Naive thymus-derived CD4-positive, alpha-beta T cell (primary cell): ENCODE measurements at regions of chr19 and their contacts with region 1.

Region 1: DNA sequence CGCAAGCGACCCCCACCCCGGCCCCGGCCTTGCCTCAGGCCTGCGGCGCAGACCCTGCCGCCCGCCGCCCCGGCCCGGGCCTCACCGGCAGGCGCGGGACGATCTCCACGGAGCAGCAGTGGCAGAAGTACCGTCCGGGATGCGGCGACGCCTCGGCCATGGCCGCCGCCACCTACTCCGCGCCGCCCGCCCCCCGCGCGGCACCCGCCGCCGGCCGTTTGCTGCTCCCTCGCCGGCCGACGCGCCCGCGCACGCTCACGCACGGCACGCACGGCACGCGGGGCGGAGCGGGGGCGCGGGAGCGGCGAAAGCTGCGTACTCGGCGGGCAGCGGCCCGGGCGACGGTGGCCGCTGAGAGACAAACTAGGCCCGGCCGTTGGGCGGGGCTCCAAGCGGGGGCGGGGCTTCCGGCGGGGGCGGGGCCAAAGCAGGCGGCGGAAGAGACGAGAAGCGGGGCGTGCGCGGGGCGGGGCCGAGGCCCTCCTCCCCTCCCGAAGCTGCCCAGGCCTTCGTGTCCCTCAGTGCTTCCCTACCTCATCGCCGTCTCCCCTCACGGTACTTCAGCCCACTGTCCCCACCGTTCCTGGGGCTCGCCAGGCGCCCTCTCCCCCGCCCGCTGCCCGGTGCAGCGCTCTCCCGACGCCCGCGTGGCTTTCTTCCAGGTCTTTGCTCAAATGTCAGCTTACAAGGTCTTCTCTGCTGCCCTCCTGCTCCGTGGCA is at the start of gene RNF126:
- DNase-seq: peak; percentile 83 to 92 (median 88)
- ATAC-seq: peak; percentile 78
- H3K4me3 ChIP-seq: peak within 1 kb of the TSS; percentile 92
- H3K4me3 Mint-ChIP-seq: peak within 1 kb of the TSS; percentile 95 to 99 (median 98)
- H3K27ac ChIP-seq: peak within 1 kb of the TSS; percentile 96
- H3K27ac Mint-ChIP-seq: peak within 1 kb of the TSS; percentile 93 to 98 (median 97)
- H3K4me1 ChIP-seq: peaks cover 27 to 30% of the 10 kb centered on the region in 2 donors
- H3K4me1 Mint-ChIP-seq: peaks cover 20 to 40% (median 32%) of the 10 kb centered on the region in 7 donors
- H3K27me3 ChIP-seq: no peaks in the 10 kb centered on the region
- H3K27me3 Mint-ChIP-seq: peaks cover 0 to 2% (median 0%) of the 10 kb centered on the region in 5 donors
- total RNA-seq, gene RNF126: 75.1 to 110 (median 101) TPM

Region 2: GRCh38 chr19:531009-531752 is 131.9 kb before region 1 on chr19:
- CTCF ChIA-PET with region 1: no interaction called
- POLR2A ChIA-PET with region 1: interaction called, 3 read pairs
- intact Hi-C with region 1: loop called in 1 of 2 experiments (anchors 1 kb)
- DNase-seq: peak; percentile 79 to 100 (median 94)
- ATAC-seq: peak; percentile 87
- H3K4me3 ChIP-seq: peak overlapping the region; percentile 72
- H3K4me3 Mint-ChIP-seq: peak overlapping the region; percentile 64 to 93 (median 82)
- H3K27ac ChIP-seq: peak overlapping the region; percentile 90
- H3K27ac Mint-ChIP-seq: peak overlapping the region in 8 of 9 donors; percentile 19 to 87 (median 80)
- H3K4me1 ChIP-seq: peaks cover 8 to 9% of the 10 kb centered on the region in 2 donors
- H3K4me1 Mint-ChIP-seq: peaks cover 8 to 32% (median 16%) of the 10 kb centered on the region in 7 donors
- H3K27me3 ChIP-seq: no peaks in the 10 kb centered on the region
- H3K27me3 Mint-ChIP-seq: peaks cover 0 to 4% (median 0%) of the 10 kb centered on the region in 5 donors

Region 3: DNA sequence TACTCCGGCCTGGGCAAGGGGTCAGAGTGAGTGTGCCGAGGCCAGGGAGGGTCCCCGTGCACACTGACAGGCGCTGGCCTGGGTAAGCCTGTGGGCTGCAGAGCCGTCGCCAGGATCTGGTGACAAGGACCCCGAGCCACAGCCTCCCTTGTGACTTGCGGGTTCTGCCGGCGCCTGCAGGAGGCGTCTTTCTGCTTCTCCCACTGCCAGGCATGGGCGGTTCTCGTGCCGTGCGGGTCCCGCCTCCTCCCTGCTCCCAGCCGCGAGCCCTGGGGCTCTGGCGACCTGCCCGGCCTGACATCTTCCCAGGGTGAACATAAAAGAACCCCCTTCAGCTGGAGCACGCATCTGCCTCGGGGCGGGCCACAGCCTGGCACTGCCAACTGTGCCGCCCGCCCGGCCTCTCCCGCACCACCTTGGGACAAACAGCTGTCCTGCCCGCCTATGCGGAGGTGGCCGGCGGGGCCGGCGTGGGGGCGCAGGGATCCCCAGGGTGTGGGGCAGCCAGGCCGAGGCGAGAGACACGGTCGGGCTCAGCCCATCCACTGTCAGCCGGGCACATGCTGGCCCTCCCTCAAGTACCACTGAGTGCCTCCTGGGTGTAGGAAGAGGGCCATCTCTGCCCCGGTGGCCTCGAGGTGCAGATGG is 74.9 kb before region 1 on chr19:
- CTCF ChIA-PET with region 1: interaction called, 3 read pairs
- POLR2A ChIA-PET with region 1: interaction called, 3 read pairs
- intact Hi-C with region 1: loop called in 1 of 2 experiments (anchors 2 kb)
- DNase-seq: peak; percentile 35 to 72 (median 57)
- ATAC-seq: peak; percentile 66
- H3K4me3 ChIP-seq: no peak overlapping the region
- H3K4me3 Mint-ChIP-seq: peak overlapping the region in 8 of 10 donors; percentile 28 to 76 (median 48)
- H3K27ac ChIP-seq: no peak overlapping the region
- H3K27ac Mint-ChIP-seq: no peak overlapping the region
- H3K4me1 ChIP-seq: peaks cover 10 to 12% of the 10 kb centered on the region in 2 donors
- H3K4me1 Mint-ChIP-seq: peaks cover 0 to 11% (median 4%) of the 10 kb centered on the region in 7 donors
- H3K27me3 ChIP-seq: peaks cover 0 to 10% of the 10 kb centered on the region in 2 donors
- H3K27me3 Mint-ChIP-seq: peaks cover 0 to 31% (median 8%) of the 10 kb centered on the region in 5 donors

Region 4: DNA sequence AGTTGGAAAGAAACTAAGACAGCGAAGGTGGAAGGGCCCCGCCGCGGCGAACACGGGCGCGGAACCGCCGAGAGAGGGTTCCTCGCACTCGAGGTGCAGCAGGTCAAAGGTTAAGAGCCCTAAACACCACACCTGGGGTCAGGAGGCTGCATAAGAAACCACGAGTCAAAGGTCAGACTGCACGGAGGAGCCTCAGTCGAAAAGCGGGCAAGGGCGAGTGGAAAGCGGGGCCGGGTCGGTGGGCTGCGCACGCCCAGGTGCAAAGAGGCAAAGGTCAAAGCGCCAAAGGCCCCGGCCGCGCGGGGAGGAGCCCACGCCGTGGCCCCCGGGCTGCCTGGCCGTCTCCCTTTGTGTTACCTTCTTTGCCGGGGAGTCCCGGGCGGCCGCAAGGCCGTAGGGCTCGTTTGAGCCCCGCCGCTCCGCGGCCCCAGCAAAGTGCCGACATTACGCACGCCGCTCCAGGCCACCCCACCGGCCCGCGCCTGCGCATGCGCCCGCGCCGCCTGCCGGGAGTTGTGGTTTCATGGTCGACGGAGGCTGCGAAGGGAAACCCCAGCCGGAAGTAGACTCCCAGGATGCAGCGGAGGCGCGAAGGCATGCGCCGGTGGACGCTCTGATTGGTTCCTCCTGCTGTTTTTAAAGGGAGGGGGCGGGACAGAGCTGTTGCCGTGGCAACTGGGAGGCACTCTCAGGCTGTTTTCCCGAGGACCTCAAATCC is 29.9 kb before region 1 on chr19 and contains the start of gene POLRMT:
- CTCF ChIA-PET with region 1: interaction called, 4 read pairs
- POLR2A ChIA-PET with region 1: interaction called, 18 read pairs
- intact Hi-C with region 1: loop called (anchors 1 kb)
- DNase-seq: peak; percentile 87 to 99 (median 96)
- ATAC-seq: peak; percentile 99
- H3K4me3 ChIP-seq: peak within 1 kb of the TSS; percentile 91
- H3K4me3 Mint-ChIP-seq: peak within 1 kb of the TSS; percentile 92 to 99 (median 97)
- H3K27ac ChIP-seq: peak within 1 kb of the TSS; percentile 78
- H3K27ac Mint-ChIP-seq: peak within 1 kb of the TSS; percentile 89 to 97 (median 93)
- H3K4me1 ChIP-seq: peaks cover 6 to 13% of the 10 kb centered on the region in 2 donors
- H3K4me1 Mint-ChIP-seq: peaks cover 13 to 41% (median 24%) of the 10 kb centered on the region in 7 donors
- H3K27me3 ChIP-seq: no peaks in the 10 kb centered on the region
- H3K27me3 Mint-ChIP-seq: no peaks in the 10 kb centered on the region
- total RNA-seq, gene POLRMT: 61.2 to 105 (median 71.3) TPM

Region 5: DNA sequence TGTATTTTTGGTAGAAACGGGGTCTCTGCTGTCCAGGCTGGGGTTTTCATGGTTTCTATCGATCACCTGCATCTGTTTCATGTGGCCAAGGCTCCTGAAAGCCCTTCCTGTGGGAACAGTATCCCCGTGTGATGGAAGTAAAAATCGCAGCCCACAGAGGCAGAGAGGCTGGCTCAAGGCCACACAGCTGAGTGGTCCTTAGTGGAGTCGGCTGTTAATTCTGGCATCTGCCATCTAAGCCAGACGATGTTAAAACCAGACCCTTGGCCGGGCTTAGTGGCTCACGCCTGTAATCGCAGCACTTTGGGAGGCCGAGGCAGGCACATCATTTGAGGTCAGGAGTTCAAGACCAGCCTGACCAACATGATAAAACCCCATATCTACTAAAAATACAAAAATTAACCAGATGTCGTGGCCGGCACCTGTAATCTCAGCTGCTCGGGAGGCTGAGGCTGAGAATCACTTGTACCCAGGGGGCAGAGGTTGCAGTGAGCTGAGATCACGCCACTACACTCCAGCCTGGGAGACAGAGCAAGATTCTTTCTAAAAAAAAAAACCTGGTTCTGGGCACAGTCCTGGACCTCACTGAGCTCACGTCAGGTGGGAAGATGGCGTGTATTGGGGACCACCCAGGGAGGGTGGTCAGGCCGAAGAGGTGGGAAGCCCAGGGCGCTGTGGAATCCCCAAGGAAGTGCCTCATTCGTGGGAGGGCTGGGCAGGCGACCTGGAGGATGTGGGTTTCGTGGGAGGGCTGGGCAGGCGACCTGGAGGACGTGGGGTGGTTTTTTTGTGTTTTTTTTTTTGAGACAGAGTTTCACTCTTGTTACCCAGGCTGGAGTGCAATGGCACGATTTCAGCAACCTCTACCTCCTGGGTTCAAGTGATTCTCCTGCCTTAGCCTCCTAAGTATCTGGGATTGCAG is 69.3 kb after region 1 on chr19:
- CTCF ChIA-PET with region 1: interaction called, 7 read pairs
- POLR2A ChIA-PET with region 1: interaction called, 8 read pairs
- intact Hi-C with region 1: loop called in 1 of 2 experiments (anchors 1 kb)
- DNase-seq: no peak
- ATAC-seq: no peak
- H3K4me3 ChIP-seq: no peak overlapping the region
- H3K4me3 Mint-ChIP-seq: no peak overlapping the region
- H3K27ac ChIP-seq: no peak overlapping the region
- H3K27ac Mint-ChIP-seq: no peak overlapping the region
- H3K4me1 ChIP-seq: no peaks in the 10 kb centered on the region
- H3K4me1 Mint-ChIP-seq: peaks cover 0 to 10% (median 5%) of the 10 kb centered on the region in 7 donors
- H3K27me3 ChIP-seq: no peaks in the 10 kb centered on the region
- H3K27me3 Mint-ChIP-seq: no peaks in the 10 kb centered on the region

Region 6: GRCh38 chr19:1249298-1249989 is 586.3 kb after region 1 on chr19:
- CTCF ChIA-PET with region 1: no interaction called
- POLR2A ChIA-PET with region 1: no interaction called
- intact Hi-C with region 1: loop called in 1 of 2 experiments (anchors 10 kb)
- DNase-seq: peak; percentile 88 to 97 (median 94)
- ATAC-seq: peak; percentile 74
- H3K4me3 ChIP-seq: peak overlapping the region; percentile 63
- H3K4me3 Mint-ChIP-seq: peak overlapping the region; percentile 80 to 95 (median 88)
- H3K27ac ChIP-seq: peak overlapping the region; percentile 94
- H3K27ac Mint-ChIP-seq: peak overlapping the region; percentile 62 to 95 (median 89)
- H3K4me1 ChIP-seq: peaks cover 22 to 27% of the 10 kb centered on the region in 2 donors
- H3K4me1 Mint-ChIP-seq: peaks cover 0 to 11% (median 10%) of the 10 kb centered on the region in 7 donors
- H3K27me3 ChIP-seq: no peaks in the 10 kb centered on the region
- H3K27me3 Mint-ChIP-seq: no peaks in the 10 kb centered on the region

Region 7: DNA sequence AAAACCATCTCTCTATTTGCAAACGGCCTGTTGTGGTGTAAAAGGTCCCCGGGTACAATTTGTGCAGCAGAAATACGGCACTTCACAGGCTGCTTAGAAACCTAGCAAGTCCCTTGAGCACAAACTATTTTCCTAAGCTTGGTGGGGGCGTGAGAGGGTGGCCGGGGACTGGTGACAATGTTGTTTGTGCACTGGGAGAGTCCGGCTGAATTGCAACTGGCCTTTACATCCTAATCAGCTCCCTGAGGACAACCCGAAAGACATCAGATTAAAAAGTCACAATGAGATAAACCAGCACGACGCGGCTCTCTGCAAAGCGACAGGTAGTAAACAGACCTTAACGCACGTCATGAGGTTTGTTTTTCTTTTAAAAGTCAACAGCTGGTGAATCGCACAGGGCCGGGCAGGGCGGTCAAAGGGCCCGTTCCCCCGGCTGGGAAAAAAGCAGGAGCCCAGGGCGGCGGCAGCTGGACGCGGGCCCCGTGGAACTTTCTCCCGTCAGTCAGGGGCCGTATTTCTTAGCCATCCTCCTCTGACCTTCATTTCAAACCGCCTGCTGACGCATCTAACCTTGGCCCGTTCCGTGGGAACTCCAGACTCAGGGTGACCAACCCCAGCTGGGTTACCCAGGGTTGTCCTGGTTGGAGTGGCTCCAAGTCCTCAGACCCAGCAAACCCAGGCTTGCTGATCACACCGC is 1925.1 kb after region 1 on chr19:
- CTCF ChIA-PET with region 1: no interaction called
- POLR2A ChIA-PET with region 1: no interaction called
- intact Hi-C with region 1: no loop called
- DNase-seq: no peak
- ATAC-seq: no peak
- H3K4me3 ChIP-seq: no peak overlapping the region
- H3K4me3 Mint-ChIP-seq: no peak overlapping the region
- H3K27ac ChIP-seq: no peak overlapping the region
- H3K27ac Mint-ChIP-seq: no peak overlapping the region
- H3K4me1 ChIP-seq: no peaks in the 10 kb centered on the region
- H3K4me1 Mint-ChIP-seq: peaks cover 0 to 4% (median 0%) of the 10 kb centered on the region in 7 donors
- H3K27me3 ChIP-seq: no peaks in the 10 kb centered on the region
- H3K27me3 Mint-ChIP-seq: peaks cover 0 to 44% (median 0%) of the 10 kb centered on the region in 5 donors